Activated CD4-positive, alpha-beta T cell treated with anti-CD3 and anti-CD28 coated beads, Interleukin-2, amount 10 ng/mL, durations not matched to agents 24 days and 14 days (primary cell): ENCODE measurements at regions of chr19 and their contacts with region 1.

Region 1: DNA sequence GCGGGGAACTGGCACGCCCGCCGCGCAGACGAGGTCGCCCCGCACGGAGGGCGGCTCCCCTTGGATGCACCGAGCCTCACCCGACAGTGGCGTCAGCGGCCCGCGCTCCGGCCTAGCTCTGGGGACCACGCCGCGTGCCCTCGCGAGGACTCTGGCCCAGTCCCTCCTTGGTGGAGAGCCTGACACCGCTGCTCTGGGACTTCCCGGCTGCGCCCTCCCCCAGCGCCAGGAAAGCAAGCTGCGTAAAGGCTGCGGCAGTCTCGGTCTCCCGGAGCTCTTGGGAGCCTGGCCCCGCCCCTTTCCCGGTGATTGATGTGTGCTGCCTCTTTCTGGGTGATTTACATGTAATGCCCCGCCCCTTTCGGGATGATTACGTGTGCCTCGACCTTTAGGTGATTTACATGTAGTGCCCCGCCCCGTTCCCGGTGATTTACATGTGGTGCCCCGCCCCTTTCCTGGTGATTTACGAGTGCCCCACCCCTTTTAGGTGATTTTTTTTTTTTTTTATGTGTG is at the start of gene LENG9:
- DNase-seq: peak; percentile 99
- H3K4me3 Mint-ChIP-seq: peak within 1 kb of the TSS; percentile 87
- H3K27ac Mint-ChIP-seq: peak within 1 kb of the TSS; percentile 90
- H3K4me1 Mint-ChIP-seq: peaks cover 26% of the 10 kb centered on the region
- H3K27me3 Mint-ChIP-seq: peaks cover 16% of the 10 kb centered on the region
- total RNA-seq, gene LENG9: 8.2 and 8.3 TPM in 2 replicates

Region 2: DNA sequence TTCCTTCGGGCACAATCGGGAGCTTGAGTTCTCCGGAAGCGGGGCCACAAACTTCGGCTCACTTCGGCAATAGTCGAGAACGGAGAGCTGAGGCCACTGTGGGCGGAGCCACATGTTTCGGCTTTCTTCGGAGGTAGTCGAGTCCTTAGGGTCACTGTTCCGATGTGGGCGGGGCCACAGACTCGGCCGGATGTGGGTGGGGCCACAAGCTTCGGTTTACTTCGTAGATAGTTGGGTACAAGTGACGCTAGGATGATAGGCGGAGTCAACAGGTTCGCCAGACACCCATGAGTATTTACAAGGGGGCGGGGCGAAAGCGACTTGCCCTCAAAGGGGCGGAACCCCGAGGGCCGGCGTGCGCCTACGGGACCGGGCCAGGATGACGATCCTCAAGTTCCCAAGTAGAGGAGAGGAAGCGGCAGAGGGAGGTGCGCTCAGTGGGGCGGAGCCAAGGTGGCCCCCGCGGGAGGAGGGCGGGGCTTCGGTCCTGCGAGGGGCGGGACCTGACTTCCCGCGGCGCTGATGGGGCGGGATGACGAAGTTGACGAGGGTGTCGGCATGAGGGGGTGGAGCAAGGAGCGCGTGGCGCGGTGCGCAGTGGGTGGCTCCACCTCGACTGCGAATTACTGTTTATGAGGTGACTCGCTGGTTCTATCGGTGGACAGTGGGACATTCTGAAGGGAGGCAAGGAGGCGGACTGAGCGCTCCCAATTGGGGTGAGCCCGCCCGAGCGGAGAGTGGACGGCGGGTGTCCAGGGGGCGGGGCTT is 273.7 kb before region 1 on chr19:
- intact Hi-C with region 1: loop called (anchors 5 kb)
- DNase-seq: peak; percentile 100
- H3K4me3 Mint-ChIP-seq: peak overlapping the region; percentile 85
- H3K27ac Mint-ChIP-seq: peak overlapping the region; percentile 98
- H3K4me1 Mint-ChIP-seq: peaks cover 28% of the 10 kb centered on the region
- H3K27me3 Mint-ChIP-seq: no peaks in the 10 kb centered on the region

Region 3: DNA sequence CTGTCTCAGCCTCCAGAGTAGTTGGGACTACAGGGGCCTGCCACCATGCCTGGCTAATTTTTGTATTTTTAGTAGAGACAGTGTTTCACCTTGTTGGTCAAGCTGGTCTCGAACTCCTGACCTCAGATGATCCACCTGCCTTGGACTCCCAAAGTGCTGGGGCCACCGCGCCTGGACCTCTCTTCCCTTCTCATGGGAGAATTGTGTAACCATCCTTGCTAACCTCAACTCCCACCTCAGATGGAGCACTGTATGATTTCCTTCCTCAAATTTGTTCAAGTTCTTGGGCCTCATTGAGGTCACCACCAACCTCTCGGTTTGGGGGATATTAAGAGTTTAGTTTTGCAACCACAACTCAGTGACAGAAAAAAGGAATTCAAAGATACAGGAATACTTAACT is 161.3 kb before region 1 on chr19:
- intact Hi-C with region 1: no loop called
- DNase-seq: no peak
- H3K4me3 Mint-ChIP-seq: no peak overlapping the region
- H3K27ac Mint-ChIP-seq: no peak overlapping the region
- H3K4me1 Mint-ChIP-seq: peaks cover 13% of the 10 kb centered on the region
- H3K27me3 Mint-ChIP-seq: no peaks in the 10 kb centered on the region

Region 4: DNA sequence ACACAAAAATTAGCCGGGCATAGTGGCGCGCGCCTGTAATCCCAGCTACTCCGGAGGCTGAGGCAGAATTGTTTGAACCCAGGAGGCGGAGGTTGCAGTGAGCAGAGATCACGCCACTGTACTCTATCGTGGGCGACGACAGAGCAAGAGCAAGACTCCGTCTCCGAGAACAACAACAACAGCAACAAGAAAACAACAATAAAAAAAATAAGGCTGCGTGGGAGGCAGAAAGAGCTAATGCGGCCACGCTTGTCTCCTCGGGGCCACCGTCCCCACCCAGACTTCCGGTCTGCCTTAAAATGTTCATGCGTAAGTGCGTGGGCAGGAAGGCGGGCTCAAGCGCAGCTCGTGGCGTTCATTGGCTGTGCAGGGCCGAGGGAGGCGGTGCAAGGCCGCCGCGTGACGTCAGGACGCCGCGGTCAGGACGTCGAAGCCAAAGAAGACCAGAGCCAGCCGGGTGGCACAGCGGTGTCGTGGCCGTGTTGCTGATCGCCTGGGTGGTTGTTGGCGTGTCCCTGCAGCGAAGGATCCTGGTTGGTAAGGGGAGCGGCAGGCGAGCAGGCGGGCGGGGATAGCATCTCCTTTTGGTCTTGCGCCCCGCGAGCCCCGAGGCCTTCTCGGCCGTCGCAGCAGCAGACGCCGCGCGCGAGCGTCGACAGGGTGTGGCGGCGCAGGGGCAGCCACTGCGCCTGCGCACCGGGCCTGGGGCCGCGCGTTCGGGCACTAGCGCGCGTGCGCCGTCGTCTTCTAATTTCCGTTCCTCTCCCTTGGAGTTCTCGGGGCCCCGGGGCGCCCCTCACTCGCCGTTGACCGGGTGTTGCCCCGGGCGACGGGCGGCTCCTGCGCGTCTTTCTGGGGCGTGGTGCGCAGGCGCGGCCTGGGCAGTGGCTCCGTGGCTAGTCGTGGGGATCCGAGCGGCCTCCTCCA is 14.6 kb before region 1 on chr19 and contains the start of gene LENG8:
- intact Hi-C with region 1: loop called (anchors 1 kb)
- DNase-seq: peak; percentile 99
- H3K4me3 Mint-ChIP-seq: peak within 1 kb of the TSS; percentile 96
- H3K27ac Mint-ChIP-seq: peak within 1 kb of the TSS; percentile 100
- H3K4me1 Mint-ChIP-seq: peaks cover 31% of the 10 kb centered on the region
- H3K27me3 Mint-ChIP-seq: peaks cover 2% of the 10 kb centered on the region
- total RNA-seq, gene LENG8: 202 and 214 TPM in 2 replicates

Region 5: GRCh38 chr19:54481322-54481930 is 17.8 kb after region 1 on chr19:
- intact Hi-C with region 1: no loop called
- DNase-seq: peak; percentile 84
- H3K4me3 Mint-ChIP-seq: no peak overlapping the region
- H3K27ac Mint-ChIP-seq: no peak overlapping the region
- H3K4me1 Mint-ChIP-seq: peaks cover 8% of the 10 kb centered on the region
- H3K27me3 Mint-ChIP-seq: peaks cover 24% of the 10 kb centered on the region

Region 6: GRCh38 chr19:54541712-54542111 is 78.1 kb after region 1 on chr19:
- intact Hi-C with region 1: no loop called
- DNase-seq: no peak
- H3K4me3 Mint-ChIP-seq: no peak overlapping the region
- H3K27ac Mint-ChIP-seq: peak overlapping the region; percentile 60
- H3K4me1 Mint-ChIP-seq: peaks cover 15% of the 10 kb centered on the region
- H3K27me3 Mint-ChIP-seq: peaks cover 4% of the 10 kb centered on the region

Region 7: DNA sequence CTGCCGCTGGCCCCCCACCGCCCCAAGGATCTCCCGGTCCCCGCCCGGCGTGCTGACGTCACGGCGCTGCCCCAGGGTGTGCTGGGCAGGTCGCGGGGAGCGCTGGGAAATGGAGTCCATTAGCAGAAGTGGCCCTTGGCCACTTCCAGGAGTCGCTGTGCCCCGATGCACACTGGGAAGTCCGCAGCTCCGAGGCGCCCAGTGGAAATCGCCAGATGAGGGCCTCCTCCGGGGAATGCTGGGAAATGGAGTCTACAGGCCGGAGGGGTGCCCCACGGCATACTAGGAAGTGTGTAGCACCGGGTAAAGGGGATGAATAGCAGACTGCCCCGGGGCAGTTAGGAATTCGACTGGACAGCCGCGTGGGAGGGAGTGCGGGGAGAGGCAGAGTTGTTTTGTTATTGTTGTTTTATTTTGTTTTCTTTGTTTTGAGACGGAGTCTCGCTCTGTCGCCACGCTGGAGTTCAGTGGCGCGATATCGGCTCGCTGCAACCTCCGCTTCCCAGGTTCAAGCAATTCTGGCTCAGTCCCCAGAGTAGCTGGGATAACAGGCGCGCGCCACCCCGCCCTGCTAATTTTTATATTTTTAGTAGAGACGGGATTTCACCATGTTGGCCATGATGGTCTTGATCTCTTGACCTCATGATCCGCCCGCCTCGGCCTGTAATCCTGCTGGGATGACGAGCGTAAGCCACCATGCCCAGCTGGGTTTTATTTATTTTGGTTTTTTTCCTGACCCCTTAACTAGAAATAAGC is 654.2 kb after region 1 on chr19 and contains the start of gene PPP1R12C:
- intact Hi-C with region 1: loop called (anchors 5 kb)
- DNase-seq: peak; percentile 99
- H3K4me3 Mint-ChIP-seq: peak within 1 kb of the TSS; percentile 94
- H3K27ac Mint-ChIP-seq: peak within 1 kb of the TSS; percentile 91
- H3K4me1 Mint-ChIP-seq: peaks cover 28% of the 10 kb centered on the region
- H3K27me3 Mint-ChIP-seq: peaks cover 10% of the 10 kb centered on the region
- total RNA-seq, gene PPP1R12C: 103 and 104 TPM in 2 replicates

Region 8: DNA sequence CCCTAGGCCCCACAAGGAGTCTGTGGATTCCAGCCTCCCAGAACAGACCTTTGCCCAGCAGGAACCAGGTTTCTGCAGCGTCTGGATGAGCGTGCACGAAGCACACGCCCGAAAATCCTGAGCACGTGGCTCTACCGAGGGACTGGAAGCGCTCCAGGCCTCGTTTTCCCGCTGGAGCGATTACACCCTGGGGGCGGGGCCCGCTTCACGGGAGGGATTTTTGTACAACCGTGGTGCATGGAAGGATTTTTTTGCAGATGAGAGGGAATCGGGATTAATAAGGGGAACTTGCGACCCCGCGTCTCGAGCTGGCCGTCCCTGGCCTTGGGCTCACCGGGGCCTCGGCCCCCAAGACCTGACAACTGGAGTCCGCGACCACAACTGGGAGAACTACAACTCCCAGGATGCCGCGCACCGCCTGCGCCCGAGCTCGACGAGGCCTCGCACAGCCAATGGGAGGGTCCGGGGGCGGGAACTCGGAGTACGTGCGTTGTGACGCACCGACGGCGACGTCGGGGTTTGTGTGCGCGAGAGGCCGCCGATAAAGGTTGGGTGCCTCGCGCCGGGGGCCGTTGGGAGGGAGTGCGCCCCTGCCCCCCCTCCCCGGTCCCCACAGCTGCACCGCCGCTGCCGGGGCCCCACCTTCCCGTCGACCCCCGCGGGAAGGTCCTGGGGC is 1012.7 kb after region 1 on chr19 and contains the start of gene ZNF628:
- intact Hi-C with region 1: loop called (anchors 5 kb)
- DNase-seq: peak; percentile 99
- H3K4me3 Mint-ChIP-seq: peak within 1 kb of the TSS; percentile 93
- H3K27ac Mint-ChIP-seq: peak within 1 kb of the TSS; percentile 96
- H3K4me1 Mint-ChIP-seq: peaks cover 23% of the 10 kb centered on the region
- H3K27me3 Mint-ChIP-seq: no peaks in the 10 kb centered on the region
- total RNA-seq, gene ZNF628: 8.8 and 10.0 TPM in 2 replicates

Region 9: GRCh38 chr19:55624109-55625003 is 1160.8 kb after region 1 on chr19 and contains the start of gene ZNF784:
- intact Hi-C with region 1: loop called (anchors 10 kb)
- DNase-seq: peak; percentile 98
- H3K4me3 Mint-ChIP-seq: peak within 1 kb of the TSS; percentile 96
- H3K27ac Mint-ChIP-seq: peak within 1 kb of the TSS; percentile 99
- H3K4me1 Mint-ChIP-seq: peaks cover 43% of the 10 kb centered on the region
- H3K27me3 Mint-ChIP-seq: peaks cover 13% of the 10 kb centered on the region
- total RNA-seq, gene ZNF784: 3.6 and 3.7 TPM in 2 replicates